ENCODE measurements at regions of chr6 and their contacts with region 1.

Region 1: GRCh38 chr6:158311193-158311592 is 1.1 kb upstream of the TULP4 start:
- DNase-seq: no peak
- H3K4me3 ChIP-seq: no peak overlapping the region
- H3K27ac ChIP-seq: no peak overlapping the region
- H3K4me1 ChIP-seq: no peaks in the 10 kb centered on the region
- H3K27me3 ChIP-seq: no peaks in the 10 kb centered on the region
- CTCF ChIP-seq: no peak

Region 2: GRCh38 chr6:158284007-158284875 is 27.0 kb before region 1 on chr6:
- CTCF ChIA-PET with region 1: interaction called, 10 read pairs
- POLR2A ChIA-PET with region 1: interaction called, 3 read pairs
- intact Hi-C with region 1: no loop called
- DNase-seq: no peak
- H3K4me3 ChIP-seq: no peak overlapping the region
- H3K27ac ChIP-seq: no peak overlapping the region
- H3K4me1 ChIP-seq: no peaks in the 10 kb centered on the region
- H3K27me3 ChIP-seq: no peaks in the 10 kb centered on the region
- CTCF ChIP-seq: no peak

Measured in PC-9 (cell line).